SK-N-SH (cell line): ENCODE measurements at regions of chr12 and their contacts with region 1.

Region 1: DNA sequence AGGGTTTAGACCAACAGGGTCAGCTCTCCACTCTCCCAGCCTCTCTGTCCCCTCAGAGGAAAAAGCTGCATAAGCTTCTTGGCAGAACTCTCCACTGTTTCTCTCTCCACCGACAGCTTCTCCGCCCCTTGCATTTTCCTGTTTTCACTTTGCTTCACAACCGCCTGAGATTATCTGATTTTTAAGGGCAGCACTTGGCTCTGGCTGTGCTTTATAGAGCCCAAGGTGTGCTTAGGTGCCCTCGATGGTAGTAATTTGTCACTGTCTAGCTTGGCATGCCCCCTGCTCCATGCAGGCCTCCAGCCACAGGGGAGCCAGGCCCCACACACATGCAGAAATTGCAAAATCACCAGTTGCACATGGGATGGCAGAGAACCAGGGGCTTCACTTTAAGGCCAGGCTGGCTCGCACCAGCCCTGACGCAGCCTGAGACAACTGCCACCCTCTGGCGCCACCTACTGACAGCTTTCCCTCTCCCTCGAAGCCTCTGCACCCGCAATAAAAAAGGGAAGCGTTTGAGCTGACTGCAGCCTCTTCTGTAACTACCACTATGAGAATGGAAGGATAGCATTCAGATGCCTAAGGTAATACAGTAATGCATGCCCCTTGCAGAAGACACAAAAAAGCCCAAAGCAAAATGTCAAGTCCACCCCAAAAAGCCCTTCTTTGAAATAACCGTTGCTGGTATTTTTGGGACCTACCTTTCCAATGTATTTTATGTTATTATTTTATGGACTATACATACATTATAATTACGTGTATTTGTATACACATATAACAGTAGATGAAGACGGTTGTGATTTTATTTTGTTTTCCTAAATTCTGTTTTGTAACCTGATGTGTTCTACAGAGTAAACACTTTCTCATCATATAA is 32.0 kb upstream of the RIMBP2 start:
- DNase-seq: peak; percentile 89
- H3K4me3 ChIP-seq: no peak overlapping the region; a peak in 2 of 4 replicates
- H3K27ac ChIP-seq: peak overlapping the region in 1 of 2 experiments; percentile 87; a peak in 2 of 4 replicates
- H3K4me1 ChIP-seq: peaks cover 0 to 9% of the 10 kb centered on the region in 2 experiments; a peak in 1 of 4 replicates
- H3K27me3 ChIP-seq: no peaks in the 10 kb centered on the region
- CTCF ChIP-seq: peak; percentile 53
- EP300 ChIP-seq: no peak; a peak in 1 of 4 replicates
- RAD21 ChIP-seq: peak; percentile 96

Region 2: GRCh38 chr12:130335517-130336392 is 412.3 kb before region 1 on chr12:
- CTCF ChIA-PET with region 1: interaction called, 16 read pairs
- POLR2A ChIA-PET with region 1: no interaction called
- DNase-seq: peak; percentile 70
- H3K4me3 ChIP-seq: no peak overlapping the region
- H3K27ac ChIP-seq: no peak overlapping the region
- H3K4me1 ChIP-seq: peaks cover 0 to 2% of the 10 kb centered on the region in 2 experiments; a peak in 1 of 4 replicates
- H3K27me3 ChIP-seq: no peaks in the 10 kb centered on the region
- CTCF ChIP-seq: peak; percentile 64
- EP300 ChIP-seq: no peak
- RAD21 ChIP-seq: peak; percentile 95

Region 3: DNA sequence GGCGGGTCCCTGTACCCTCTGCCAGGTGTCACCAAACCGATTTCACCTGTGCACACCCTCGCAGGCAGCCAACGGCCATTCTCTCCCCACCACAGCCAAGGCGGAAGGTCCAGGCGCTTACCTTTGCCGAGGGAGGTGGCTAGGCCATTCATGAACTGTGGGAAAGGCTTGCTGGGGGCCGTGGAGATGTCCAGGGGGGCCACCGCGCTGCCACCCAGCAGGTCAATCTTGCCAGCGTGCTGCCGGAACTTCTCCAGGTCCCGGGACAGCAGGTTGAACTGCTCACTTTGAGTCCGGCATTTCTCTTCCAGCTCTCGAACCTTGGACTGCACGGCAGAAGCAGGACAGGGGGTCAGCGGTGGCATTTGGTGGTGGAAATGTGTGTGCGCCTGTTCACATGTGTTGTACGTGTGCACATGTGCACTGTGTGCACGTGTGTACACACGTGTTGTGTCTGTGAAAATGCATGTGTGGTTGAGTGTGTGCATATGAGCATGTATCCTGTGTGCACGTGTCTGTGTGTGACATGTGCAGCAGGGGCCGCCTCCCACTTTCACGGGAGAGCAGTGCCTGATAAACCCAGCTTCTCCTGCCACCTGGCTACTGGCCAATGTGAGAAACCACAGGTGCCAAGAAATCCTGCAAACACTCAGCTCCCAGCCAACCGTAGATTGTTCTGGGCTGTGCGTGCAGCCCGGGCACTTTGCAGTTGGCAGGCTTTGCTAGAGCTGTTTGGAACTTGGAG is 291.6 kb before region 1 on chr12:
- CTCF ChIA-PET with region 1: interaction called, 27 read pairs
- POLR2A ChIA-PET with region 1: no interaction called
- DNase-seq: no peak
- H3K4me3 ChIP-seq: no peak overlapping the region
- H3K27ac ChIP-seq: no peak overlapping the region; a peak in 1 of 4 replicates
- H3K4me1 ChIP-seq: peaks cover 0 to 15% of the 10 kb centered on the region in 2 experiments; a peak in 1 of 4 replicates
- H3K27me3 ChIP-seq: no peaks in the 10 kb centered on the region
- CTCF ChIP-seq: no peak
- EP300 ChIP-seq: no peak
- RAD21 ChIP-seq: no peak

Region 4: GRCh38 chr12:130589540-130590317 is 158.4 kb before region 1 on chr12:
- CTCF ChIA-PET with region 1: interaction called, 11 read pairs
- POLR2A ChIA-PET with region 1: no interaction called
- DNase-seq: no peak
- H3K4me3 ChIP-seq: no peak overlapping the region
- H3K27ac ChIP-seq: peak overlapping the region in 1 of 2 experiments; percentile 95; a peak in 2 of 4 replicates
- H3K4me1 ChIP-seq: peaks cover 0 to 53% of the 10 kb centered on the region in 2 experiments; a peak in 2 of 4 replicates
- H3K27me3 ChIP-seq: no peaks in the 10 kb centered on the region
- CTCF ChIP-seq: no peak
- EP300 ChIP-seq: no peak
- RAD21 ChIP-seq: no peak

Region 5: DNA sequence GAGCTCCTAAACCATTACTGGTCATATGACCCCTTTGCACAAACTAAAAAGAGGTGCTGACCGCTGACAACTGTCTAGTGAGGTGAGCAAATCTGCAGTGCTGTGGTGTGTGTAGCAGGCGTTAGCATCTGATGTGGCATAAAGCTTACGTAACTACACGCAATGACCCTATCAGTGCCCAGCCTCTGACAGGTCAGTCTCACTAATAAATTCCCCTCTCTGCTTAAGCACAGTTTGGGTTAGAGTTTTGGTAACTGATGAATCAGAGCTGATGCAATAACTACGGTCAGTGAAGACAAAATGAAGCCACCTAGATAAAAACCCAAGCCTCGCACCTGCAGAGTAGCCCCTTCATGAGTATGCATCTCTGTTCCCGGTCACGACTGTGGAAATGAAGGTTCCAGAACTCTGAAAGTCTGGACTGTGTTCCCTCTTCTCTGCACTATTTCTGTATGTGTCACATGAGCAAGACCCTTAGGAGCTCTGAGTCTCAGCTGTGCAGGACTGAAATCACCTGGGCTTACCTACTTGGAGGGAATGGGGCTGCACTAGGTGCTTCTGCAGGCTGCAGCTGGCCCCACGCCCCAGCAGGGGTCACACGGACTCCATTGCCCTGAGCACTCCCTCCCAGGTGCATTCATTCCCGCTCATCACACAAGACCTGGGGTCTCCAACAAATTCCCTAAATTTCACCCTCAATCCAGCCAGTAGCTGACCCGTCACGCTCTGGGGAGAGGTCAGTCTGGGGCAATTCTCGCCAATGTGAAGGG is 86.4 kb before region 1 on chr12:
- CTCF ChIA-PET with region 1: interaction called, 12 read pairs
- POLR2A ChIA-PET with region 1: no interaction called
- DNase-seq: no peak
- H3K4me3 ChIP-seq: no peak overlapping the region
- H3K27ac ChIP-seq: no peak overlapping the region
- H3K4me1 ChIP-seq: peaks cover 0 to 17% of the 10 kb centered on the region in 2 experiments; a peak in 1 of 4 replicates
- H3K27me3 ChIP-seq: no peaks in the 10 kb centered on the region
- CTCF ChIP-seq: no peak
- EP300 ChIP-seq: no peak
- RAD21 ChIP-seq: 0 out of 2 replicates have a peak, but pooled peaks have one; percentile 9

Region 6: GRCh38 chr12:130728158-130729058 is 19.7 kb before region 1 on chr12:
- CTCF ChIA-PET with region 1: interaction called, 11 read pairs
- POLR2A ChIA-PET with region 1: no interaction called
- DNase-seq: no peak
- H3K4me3 ChIP-seq: no peak overlapping the region
- H3K27ac ChIP-seq: no peak overlapping the region; a peak in 1 of 4 replicates
- H3K4me1 ChIP-seq: peaks cover 0 to 12% of the 10 kb centered on the region in 2 experiments; a peak in 1 of 4 replicates
- H3K27me3 ChIP-seq: no peaks in the 10 kb centered on the region
- CTCF ChIP-seq: no peak
- EP300 ChIP-seq: no peak
- RAD21 ChIP-seq: no peak